MCF 10A (cell line): ENCODE measurements at regions of chr22 and their contacts with region 1.

Region 1: GRCh38 chr22:31646186-31647089 is 15.6 kb downstream of the PISD start:
- DNase-seq: peak; percentile 87
- H3K4me3 Mint-ChIP-seq: peak overlapping the region; percentile 38
- H3K27ac Mint-ChIP-seq: peak overlapping the region; percentile 91
- H3K4me1 Mint-ChIP-seq: peaks cover 15% of the 10 kb centered on the region
- H3K27me3 Mint-ChIP-seq: no peaks in the 10 kb centered on the region
- CTCF ChIP-seq: no peak

Region 2: DNA sequence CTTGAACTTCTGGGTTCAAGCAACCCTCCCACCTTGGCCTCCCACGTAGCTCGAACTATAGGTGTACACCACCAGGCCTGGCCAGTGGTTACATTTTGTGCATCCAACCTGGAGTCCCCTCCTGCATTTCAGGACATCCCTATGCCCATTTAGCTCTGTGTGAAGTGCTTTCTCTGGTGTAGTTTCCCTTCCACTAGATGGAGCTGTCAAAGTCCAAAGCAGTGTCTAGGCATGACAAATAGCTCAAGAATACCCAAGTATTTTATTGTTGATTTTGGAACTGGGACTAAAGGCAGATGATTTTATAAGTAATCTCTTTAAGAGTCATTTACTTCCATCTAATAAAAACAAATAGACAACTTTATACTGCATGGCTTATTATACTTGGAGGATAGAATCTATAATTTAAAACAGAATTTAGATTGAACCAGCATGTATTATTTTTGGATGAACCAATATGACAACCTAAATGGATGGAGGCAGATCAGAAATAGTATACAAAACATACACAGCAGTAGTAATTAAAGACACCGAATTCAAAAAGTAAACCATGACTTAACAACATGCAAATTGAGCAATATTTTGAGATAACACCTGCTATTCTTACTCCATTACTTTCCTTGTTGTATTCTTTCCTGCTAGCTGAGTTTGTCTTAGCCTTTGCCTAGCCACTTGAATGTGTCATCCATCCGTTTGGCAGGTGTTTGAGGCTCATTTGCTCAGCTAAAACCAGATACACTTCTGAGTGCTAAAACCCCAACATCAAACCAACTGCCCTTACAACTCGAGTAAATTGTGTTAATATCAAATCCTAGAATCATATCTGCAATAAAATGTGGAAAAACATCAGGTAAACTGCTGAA is 194.5 kb before region 1 on chr22:
- CTCF ChIA-PET with region 1: no interaction called
- POLR2A ChIA-PET with region 1: no interaction called
- intact Hi-C with region 1: no loop called
- DNase-seq: peak; percentile 60
- H3K4me3 Mint-ChIP-seq: no peak overlapping the region
- H3K27ac Mint-ChIP-seq: no peak overlapping the region
- H3K4me1 Mint-ChIP-seq: peaks cover 7% of the 10 kb centered on the region
- H3K27me3 Mint-ChIP-seq: no peaks in the 10 kb centered on the region
- CTCF ChIP-seq: peak; percentile 38

Region 3: DNA sequence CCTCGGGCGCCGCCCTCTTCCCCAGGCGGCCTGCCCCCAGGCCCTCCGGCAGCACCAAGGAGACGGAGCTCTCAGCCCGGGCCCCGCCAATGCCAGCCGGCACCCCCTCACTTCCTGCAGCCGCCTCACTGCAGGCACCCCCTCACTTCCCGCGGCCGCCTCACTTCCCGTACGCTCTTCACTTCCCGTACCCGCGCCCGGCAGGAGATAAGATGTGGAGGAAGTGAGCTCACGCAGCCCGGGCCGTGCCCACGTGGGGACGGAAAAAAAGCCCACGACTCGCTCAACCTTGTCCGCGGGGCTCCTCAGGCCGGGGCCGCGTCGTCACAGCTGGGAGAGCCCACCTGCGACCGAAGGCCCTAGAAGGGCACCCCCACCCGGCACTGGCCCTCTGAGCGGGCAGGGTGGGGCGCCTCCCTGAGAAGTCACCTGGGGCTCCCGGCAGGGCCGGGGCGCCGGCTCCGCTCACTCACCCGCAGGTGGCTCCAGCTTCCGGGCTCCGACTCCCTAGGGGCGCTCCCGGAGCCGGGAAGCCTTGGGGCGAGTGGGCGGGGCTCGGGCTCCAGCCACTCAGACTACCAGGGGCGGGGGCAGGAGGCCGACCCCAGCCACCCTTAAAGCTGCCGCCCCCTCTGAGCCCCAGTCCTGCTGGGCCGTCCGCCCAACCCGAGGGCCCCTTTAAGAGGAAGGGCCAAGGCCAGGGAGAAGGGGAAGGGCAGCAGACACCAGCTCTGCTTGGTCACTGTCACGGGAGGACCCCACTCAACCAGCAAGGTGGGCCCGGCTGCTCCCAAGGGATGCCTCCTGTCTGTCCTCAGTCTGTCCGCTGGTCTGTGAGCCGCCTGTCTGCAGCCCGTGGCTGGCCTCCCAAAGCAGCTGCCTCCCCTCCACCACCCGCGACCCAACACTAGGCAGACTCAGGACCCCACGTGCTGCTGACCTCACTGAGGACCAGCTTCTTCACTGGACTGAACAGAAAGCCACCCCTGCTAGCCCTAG is 15.8 kb before region 1 on chr22:
- CTCF ChIA-PET with region 1: interaction called, 3 read pairs
- POLR2A ChIA-PET with region 1: interaction called, 10 read pairs
- intact Hi-C with region 1: no loop called
- DNase-seq: peak; percentile 70
- H3K4me3 Mint-ChIP-seq: peak overlapping the region; percentile 75
- H3K27ac Mint-ChIP-seq: no peak overlapping the region
- H3K4me1 Mint-ChIP-seq: peaks cover 19% of the 10 kb centered on the region
- H3K27me3 Mint-ChIP-seq: no peaks in the 10 kb centered on the region
- CTCF ChIP-seq: no peak

Region 4: GRCh38 chr22:31676700-31677099 is 30.3 kb after region 1 on chr22:
- CTCF ChIA-PET with region 1: no interaction called
- POLR2A ChIA-PET with region 1: interaction called, 11 read pairs
- intact Hi-C with region 1: no loop called
- DNase-seq: peak; percentile 96
- H3K4me3 Mint-ChIP-seq: peak overlapping the region; percentile 86
- H3K27ac Mint-ChIP-seq: peak overlapping the region; percentile 97
- H3K4me1 Mint-ChIP-seq: peaks cover 18% of the 10 kb centered on the region
- H3K27me3 Mint-ChIP-seq: no peaks in the 10 kb centered on the region
- CTCF ChIP-seq: no peak

Region 5: DNA sequence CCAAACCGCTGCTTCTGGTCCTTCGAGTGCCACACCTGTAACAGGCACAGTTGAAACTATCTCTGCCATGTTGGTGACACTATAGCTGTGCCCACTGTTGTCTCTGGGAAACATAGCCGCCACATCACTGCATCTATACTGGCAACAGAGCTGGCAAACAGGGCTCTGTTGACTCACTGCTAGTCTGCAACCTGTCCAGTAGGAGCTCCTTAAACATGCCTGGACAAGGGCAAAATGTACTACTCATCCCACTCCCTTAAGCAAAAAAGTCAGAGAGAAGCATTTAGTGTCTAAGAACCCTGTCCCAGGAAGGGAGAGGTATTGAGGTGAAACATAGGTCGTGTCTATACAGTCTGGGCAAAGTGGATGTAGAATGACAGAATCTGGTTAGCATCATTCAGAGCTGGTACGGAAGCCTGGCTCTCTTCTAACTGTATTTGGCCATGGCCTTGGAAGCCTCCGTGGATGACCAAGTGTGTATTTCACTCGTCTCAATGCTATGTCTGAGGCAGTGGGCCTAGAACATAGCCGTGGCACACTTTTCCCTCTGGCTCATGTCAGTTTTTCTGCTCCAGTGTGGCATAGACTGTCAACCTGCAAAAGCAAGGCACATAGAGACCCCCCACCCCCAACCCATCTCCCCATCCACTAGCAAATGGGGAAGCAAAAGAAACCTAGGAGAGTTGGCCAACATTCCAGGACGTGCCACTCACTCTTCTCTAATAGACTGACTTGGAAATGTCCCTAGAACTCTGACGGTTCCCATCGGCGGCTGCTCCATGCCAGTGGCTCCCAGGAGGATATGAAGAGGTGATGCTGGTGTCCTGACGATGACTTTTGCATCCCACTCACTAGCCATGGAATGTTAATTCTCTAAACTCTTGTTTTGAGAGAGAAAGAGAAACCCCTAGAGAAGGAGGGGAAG is 37.0 kb after region 1 on chr22:
- CTCF ChIA-PET with region 1: interaction called, 3 read pairs
- POLR2A ChIA-PET with region 1: interaction called, 11 read pairs
- intact Hi-C with region 1: no loop called
- DNase-seq: peak; percentile 87
- H3K4me3 Mint-ChIP-seq: no peak overlapping the region
- H3K27ac Mint-ChIP-seq: peak overlapping the region; percentile 47
- H3K4me1 Mint-ChIP-seq: peaks cover 39% of the 10 kb centered on the region
- H3K27me3 Mint-ChIP-seq: no peaks in the 10 kb centered on the region
- CTCF ChIP-seq: no peak